ENCODE measurements at regions of chr16 and their contacts with region 1.

Region 1: DNA sequence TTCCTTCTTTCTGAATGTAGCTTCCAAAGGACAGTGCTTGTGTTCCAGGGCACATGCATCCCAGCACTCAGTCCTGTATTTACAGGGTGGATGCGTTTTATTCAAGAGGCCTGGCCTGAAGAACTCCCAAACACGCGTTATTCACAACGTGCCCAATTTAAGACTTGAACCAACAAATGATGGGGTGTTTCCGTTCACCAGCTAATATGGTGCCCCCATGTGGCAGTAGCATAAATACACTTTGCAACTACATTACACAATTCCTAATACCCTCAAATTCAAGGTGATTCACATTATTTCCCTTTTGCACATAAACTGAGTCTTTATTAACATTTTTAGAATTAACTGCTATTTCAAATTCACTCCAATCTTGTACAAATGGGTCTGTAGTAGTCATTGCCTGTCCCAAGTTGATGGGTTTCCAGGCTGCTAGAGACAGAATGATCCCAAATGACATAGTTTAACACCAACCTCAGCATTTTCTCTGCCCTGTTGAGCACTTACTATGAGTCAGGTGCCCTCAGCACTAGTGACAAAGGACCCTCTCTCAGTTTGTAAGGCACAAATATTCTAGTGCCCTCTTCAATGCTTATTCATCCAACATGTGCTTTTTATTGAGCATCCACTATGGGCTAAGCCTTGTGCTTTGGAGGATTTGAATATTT is 26.9 kb downstream of the HSD17B2 start:
- DNase-seq: no peak
- ATAC-seq: no peak
- H3K4me3 ChIP-seq: no peak overlapping the region
- H3K27ac ChIP-seq: no peak overlapping the region
- H3K4me1 ChIP-seq: no peaks in the 10 kb centered on the region
- H3K27me3 ChIP-seq: no peaks in the 10 kb centered on the region
- CTCF ChIP-seq: peak in 1 of 5 experiments; percentile 30
- POLR2A ChIP-seq: no peak

Region 2: DNA sequence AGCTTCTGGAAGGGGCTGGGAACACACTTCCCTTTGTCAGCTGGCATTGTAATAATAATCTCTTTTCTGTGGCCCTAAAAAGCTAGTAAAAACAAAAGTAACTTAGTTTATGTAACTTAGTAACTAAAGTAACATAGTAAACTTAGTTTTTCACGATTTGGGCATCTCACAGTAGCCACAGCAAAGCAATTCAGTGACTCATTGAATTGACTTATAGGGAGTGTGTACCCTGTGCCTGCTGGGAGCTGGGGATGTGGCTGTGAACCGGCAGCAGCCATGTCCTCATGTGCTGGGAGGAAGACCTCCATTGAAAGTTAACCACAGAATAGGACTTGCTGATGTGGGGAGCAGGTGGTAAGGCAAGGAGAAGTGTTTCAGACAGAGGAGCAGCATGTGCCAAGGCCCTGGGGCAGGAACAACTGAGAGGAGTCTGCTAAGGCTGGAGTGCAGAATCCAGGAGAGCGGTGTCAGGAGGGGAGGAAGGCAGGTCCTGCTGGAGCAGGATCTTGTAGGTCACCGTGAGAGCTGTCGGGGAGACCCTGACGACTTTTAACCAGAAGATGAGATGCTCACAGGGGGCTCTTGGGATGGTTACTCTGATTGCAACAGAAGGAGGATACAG is 170.1 kb before region 1 on chr16:
- in situ Hi-C with region 1: no loop called
- intact Hi-C with region 1: loop called (anchors 5 kb)
- DNase-seq: no peak
- ATAC-seq: no peak
- H3K4me3 ChIP-seq: no peak overlapping the region
- H3K27ac ChIP-seq: no peak overlapping the region
- H3K4me1 ChIP-seq: no peaks in the 10 kb centered on the region
- H3K27me3 ChIP-seq: no peaks in the 10 kb centered on the region
- CTCF ChIP-seq: no peak
- POLR2A ChIP-seq: no peak

Measured in gastrocnemius medialis (tissue), 4 donors.